ENCODE measurements at regions of chr12 and their contacts with region 1.

Region 1: GRCh38 chr12:92136965-92137721 is 8.5 kb downstream of the BTG1 start:
- DNase-seq: peak; percentile 72
- H3K4me3 Mint-ChIP-seq: peak overlapping the region; percentile 89
- H3K27ac Mint-ChIP-seq: peak overlapping the region; percentile 74
- H3K4me1 Mint-ChIP-seq: peaks cover 60% of the 10 kb centered on the region
- H3K27me3 Mint-ChIP-seq: no peaks in the 10 kb centered on the region
- CTCF ChIP-seq: no peak

Region 2: GRCh38 chr12:91778938-91779400 is 358.2 kb before region 1 on chr12:
- CTCF ChIA-PET with region 1: no interaction called
- POLR2A ChIA-PET with region 1: interaction called, 101 read pairs
- intact Hi-C with region 1: loop called (anchors 2 kb)
- DNase-seq: peak; percentile 95
- H3K4me3 Mint-ChIP-seq: peak overlapping the region; percentile 65
- H3K27ac Mint-ChIP-seq: peak overlapping the region; percentile 88
- H3K4me1 Mint-ChIP-seq: peaks cover 39% of the 10 kb centered on the region
- H3K27me3 Mint-ChIP-seq: no peaks in the 10 kb centered on the region
- CTCF ChIP-seq: no peak

Region 3: DNA sequence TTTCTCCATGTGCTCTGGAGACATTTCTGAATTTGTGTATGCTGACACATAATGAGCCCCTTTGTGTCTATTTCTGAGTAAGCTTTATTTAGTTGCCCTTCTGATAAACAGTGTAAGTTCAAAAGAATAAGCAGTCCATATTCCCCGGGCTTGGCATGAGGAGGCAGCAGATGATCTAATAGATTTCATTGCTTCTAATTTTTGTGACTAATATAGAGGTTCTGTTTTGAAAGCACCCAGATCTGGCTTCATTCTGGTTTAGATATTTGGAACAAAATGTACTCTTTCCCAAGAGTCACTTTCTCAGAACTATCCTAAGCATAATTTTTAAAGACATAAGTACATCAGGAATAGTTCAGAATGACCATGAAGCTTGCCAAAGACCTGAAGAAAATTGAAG is 282.4 kb before region 1 on chr12:
- CTCF ChIA-PET with region 1: no interaction called
- POLR2A ChIA-PET with region 1: interaction called, 17 read pairs
- intact Hi-C with region 1: loop called (anchors 1 kb)
- DNase-seq: peak; percentile 26
- H3K4me3 Mint-ChIP-seq: peak overlapping the region; percentile 13
- H3K27ac Mint-ChIP-seq: peak overlapping the region; percentile 93
- H3K4me1 Mint-ChIP-seq: peaks cover 41% of the 10 kb centered on the region
- H3K27me3 Mint-ChIP-seq: no peaks in the 10 kb centered on the region
- CTCF ChIP-seq: no peak

Region 4: GRCh38 chr12:92028441-92028709 is 108.8 kb before region 1 on chr12:
- CTCF ChIA-PET with region 1: no interaction called
- POLR2A ChIA-PET with region 1: interaction called, 43 read pairs
- intact Hi-C with region 1: no loop called
- DNase-seq: peak; percentile 85
- H3K4me3 Mint-ChIP-seq: no peak overlapping the region
- H3K27ac Mint-ChIP-seq: peak overlapping the region; percentile 65
- H3K4me1 Mint-ChIP-seq: peaks cover 49% of the 10 kb centered on the region
- H3K27me3 Mint-ChIP-seq: no peaks in the 10 kb centered on the region
- CTCF ChIP-seq: no peak

Region 5: GRCh38 chr12:92122941-92123779 is 14.0 kb before region 1 on chr12:
- CTCF ChIA-PET with region 1: no interaction called
- POLR2A ChIA-PET with region 1: interaction called, 10 read pairs
- intact Hi-C with region 1: no loop called
- DNase-seq: no peak
- H3K4me3 Mint-ChIP-seq: no peak overlapping the region
- H3K27ac Mint-ChIP-seq: peak overlapping the region; percentile 37
- H3K4me1 Mint-ChIP-seq: peaks cover 22% of the 10 kb centered on the region
- H3K27me3 Mint-ChIP-seq: no peaks in the 10 kb centered on the region
- CTCF ChIP-seq: no peak

Measured in MCF 10A (cell line).